ENCODE measurements at regions of chr12 and their contacts with region 1.

Region 1: DNA sequence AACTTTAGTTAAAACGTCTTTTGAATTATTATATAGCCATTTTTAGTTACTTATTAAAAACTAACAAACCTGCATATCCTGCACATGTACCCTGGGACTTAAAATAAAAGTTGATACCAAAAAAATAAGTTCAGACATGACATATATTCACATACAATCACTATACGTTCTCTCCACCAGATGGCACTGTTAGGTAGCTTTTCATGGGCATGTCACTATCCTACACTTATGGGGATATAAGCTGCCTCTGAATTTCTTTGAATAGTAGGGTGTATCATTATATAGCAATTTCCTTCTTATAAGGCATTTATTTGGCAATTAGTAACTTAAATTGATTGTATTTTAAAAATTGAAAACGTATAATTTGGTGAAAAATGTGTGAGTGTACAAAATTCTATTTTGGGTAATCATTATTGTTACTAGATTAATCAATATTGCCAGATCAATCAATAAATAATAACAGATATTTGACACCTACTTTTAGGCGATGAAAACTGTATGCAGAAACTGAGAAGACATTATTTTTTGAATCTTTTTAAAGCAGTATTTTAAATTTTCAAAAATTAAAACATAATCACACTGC is 31.8 kb upstream of the OR10A7 start:
- DNase-seq: peak; percentile 71
- H3K4me3 Mint-ChIP-seq: no peak overlapping the region
- H3K27ac Mint-ChIP-seq: no peak overlapping the region
- H3K4me1 Mint-ChIP-seq: no peaks in the 10 kb centered on the region
- H3K27me3 Mint-ChIP-seq: peaks cover 8% of the 10 kb centered on the region
- CTCF ChIP-seq: peak; percentile 56

Region 2: GRCh38 chr12:53267999-53268647 is 1920.9 kb before region 1 on chr12 and contains the start of gene ESPL1:
- CTCF ChIA-PET with region 1: no interaction called
- intact Hi-C with region 1: no loop called
- DNase-seq: peak; percentile 73
- H3K4me3 Mint-ChIP-seq: peak within 1 kb of the TSS; percentile 87
- H3K27ac Mint-ChIP-seq: peak within 1 kb of the TSS; percentile 64
- H3K4me1 Mint-ChIP-seq: peaks cover 15% of the 10 kb centered on the region
- H3K27me3 Mint-ChIP-seq: no peaks in the 10 kb centered on the region
- CTCF ChIP-seq: no peak
- total RNA-seq, gene ESPL1: 24.3 and 31.1 TPM in 2 replicates

Region 3: GRCh38 chr12:54870604-54871003 is 318.5 kb before region 1 on chr12:
- CTCF ChIA-PET with region 1: no interaction called
- intact Hi-C with region 1: no loop called
- DNase-seq: no peak
- H3K4me3 Mint-ChIP-seq: no peak overlapping the region
- H3K27ac Mint-ChIP-seq: no peak overlapping the region
- H3K4me1 Mint-ChIP-seq: no peaks in the 10 kb centered on the region
- H3K27me3 Mint-ChIP-seq: no peaks in the 10 kb centered on the region
- CTCF ChIP-seq: no peak

Region 4: GRCh38 chr12:55172686-55173085 is 16.4 kb before region 1 on chr12:
- CTCF ChIA-PET with region 1: no interaction called
- intact Hi-C with region 1: no loop called
- DNase-seq: no peak
- H3K4me3 Mint-ChIP-seq: no peak overlapping the region
- H3K27ac Mint-ChIP-seq: no peak overlapping the region
- H3K4me1 Mint-ChIP-seq: no peaks in the 10 kb centered on the region
- H3K27me3 Mint-ChIP-seq: peaks cover 5% of the 10 kb centered on the region
- CTCF ChIP-seq: no peak

Region 5: GRCh38 chr12:55515696-55516095 is 326.6 kb after region 1 on chr12:
- CTCF ChIA-PET with region 1: no interaction called
- intact Hi-C with region 1: loop called (anchors 10 kb)
- DNase-seq: no peak
- H3K4me3 Mint-ChIP-seq: no peak overlapping the region
- H3K27ac Mint-ChIP-seq: no peak overlapping the region
- H3K4me1 Mint-ChIP-seq: no peaks in the 10 kb centered on the region
- H3K27me3 Mint-ChIP-seq: no peaks in the 10 kb centered on the region
- CTCF ChIP-seq: no peak

Region 6: GRCh38 chr12:55797550-55797949 is 608.5 kb after region 1 on chr12:
- CTCF ChIA-PET with region 1: no interaction called
- intact Hi-C with region 1: no loop called
- DNase-seq: no peak
- H3K4me3 Mint-ChIP-seq: no peak overlapping the region
- H3K27ac Mint-ChIP-seq: no peak overlapping the region
- H3K4me1 Mint-ChIP-seq: peaks cover 10% of the 10 kb centered on the region
- H3K27me3 Mint-ChIP-seq: no peaks in the 10 kb centered on the region
- CTCF ChIP-seq: no peak

Measured in Calu3 (cell line).